ENCODE measurements at regions of chr2 and their contacts with region 1.

Region 1: GRCh38 chr2:68467077-68467960 is at the starts of genes APLF and FBXO48:
- DNase-seq: peak; percentile 99
- H3K4me3 ChIP-seq: peak within 1 kb of the TSS; percentile 80 to 94 (median 85)
- H3K27ac ChIP-seq: peak within 1 kb of the TSS; percentile 74
- H3K4me1 ChIP-seq: peaks cover 7% of the 10 kb centered on the region
- H3K27me3 ChIP-seq: no peaks in the 10 kb centered on the region
- CTCF ChIP-seq: no peak
- POLR2A ChIP-seq: peak; percentile 68
- total RNA-seq, gene APLF: 2.3 and 2.4 TPM in 2 replicates
- total RNA-seq, gene FBXO48: 0.73 and 0.83 TPM in 2 replicates

Region 2: DNA sequence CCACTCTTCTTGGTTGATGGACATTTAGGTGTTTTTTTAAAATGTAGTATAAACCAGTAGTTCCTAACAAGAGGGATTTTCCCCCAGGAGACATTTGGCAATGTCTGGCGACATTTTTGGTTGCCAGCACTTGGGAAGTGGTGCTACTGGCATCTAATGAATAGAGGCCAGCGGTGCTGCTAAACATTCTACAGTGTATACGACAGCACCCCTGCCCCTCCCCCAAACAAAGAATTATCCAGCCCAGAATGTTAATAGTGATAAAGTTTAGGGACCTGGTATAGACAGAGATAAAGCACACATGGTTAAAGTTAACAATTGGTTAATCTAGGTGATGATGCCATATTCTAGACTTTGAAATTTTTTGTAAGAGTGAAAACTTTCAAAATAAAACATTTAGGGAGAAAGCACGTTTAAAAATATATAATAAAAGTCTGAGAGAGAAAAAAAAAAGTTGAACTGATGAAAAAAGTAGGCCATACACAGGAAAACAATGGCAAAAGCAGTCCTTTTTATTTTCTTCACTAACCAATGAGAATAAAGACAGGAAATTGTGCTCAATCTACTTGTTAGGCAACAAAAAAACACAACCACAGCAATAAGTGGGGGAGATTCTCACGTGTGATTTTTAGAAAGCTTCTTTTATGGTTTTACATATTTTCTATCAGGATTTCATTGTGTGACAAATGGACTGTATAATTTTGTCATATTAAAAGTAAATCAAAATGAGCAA is 15.0 kb before region 1 on chr2:
- CTCF ChIA-PET with region 1: interaction called, 35 read pairs
- POLR2A ChIA-PET with region 1: no interaction called
- dilution Hi-C with region 1: no loop called
- intact Hi-C with region 1: no loop called
- DNase-seq: no peak
- H3K4me3 ChIP-seq: no peak overlapping the region
- H3K27ac ChIP-seq: no peak overlapping the region
- H3K4me1 ChIP-seq: no peaks in the 10 kb centered on the region
- H3K27me3 ChIP-seq: no peaks in the 10 kb centered on the region
- CTCF ChIP-seq: no peak
- POLR2A ChIP-seq: no peak

Region 3: GRCh38 chr2:68646302-68646701 is 179.0 kb after region 1 on chr2:
- CTCF ChIA-PET with region 1: interaction called, 21 read pairs
- POLR2A ChIA-PET with region 1: no interaction called
- dilution Hi-C with region 1: no loop called
- intact Hi-C with region 1: loop called (anchors 5 kb)
- DNase-seq: no peak
- H3K4me3 ChIP-seq: no peak overlapping the region
- H3K27ac ChIP-seq: no peak overlapping the region
- H3K4me1 ChIP-seq: peaks cover 4% of the 10 kb centered on the region
- H3K27me3 ChIP-seq: peaks cover 53 to 76% of the 10 kb centered on the region in 2 experiments
- CTCF ChIP-seq: no peak
- POLR2A ChIP-seq: no peak

Region 4: GRCh38 chr2:68715353-68716041 is 248.2 kb after region 1 on chr2:
- CTCF ChIA-PET with region 1: interaction called, 305 read pairs
- POLR2A ChIA-PET with region 1: no interaction called
- dilution Hi-C with region 1: no loop called
- intact Hi-C with region 1: loop called (anchors 1 kb)
- DNase-seq: peak; percentile 54
- H3K4me3 ChIP-seq: no peak overlapping the region
- H3K27ac ChIP-seq: no peak overlapping the region
- H3K4me1 ChIP-seq: no peaks in the 10 kb centered on the region
- H3K27me3 ChIP-seq: peaks cover 16 to 27% of the 10 kb centered on the region in 2 experiments
- CTCF ChIP-seq: peak; percentile 73 to 83
- POLR2A ChIP-seq: no peak

Region 5: DNA sequence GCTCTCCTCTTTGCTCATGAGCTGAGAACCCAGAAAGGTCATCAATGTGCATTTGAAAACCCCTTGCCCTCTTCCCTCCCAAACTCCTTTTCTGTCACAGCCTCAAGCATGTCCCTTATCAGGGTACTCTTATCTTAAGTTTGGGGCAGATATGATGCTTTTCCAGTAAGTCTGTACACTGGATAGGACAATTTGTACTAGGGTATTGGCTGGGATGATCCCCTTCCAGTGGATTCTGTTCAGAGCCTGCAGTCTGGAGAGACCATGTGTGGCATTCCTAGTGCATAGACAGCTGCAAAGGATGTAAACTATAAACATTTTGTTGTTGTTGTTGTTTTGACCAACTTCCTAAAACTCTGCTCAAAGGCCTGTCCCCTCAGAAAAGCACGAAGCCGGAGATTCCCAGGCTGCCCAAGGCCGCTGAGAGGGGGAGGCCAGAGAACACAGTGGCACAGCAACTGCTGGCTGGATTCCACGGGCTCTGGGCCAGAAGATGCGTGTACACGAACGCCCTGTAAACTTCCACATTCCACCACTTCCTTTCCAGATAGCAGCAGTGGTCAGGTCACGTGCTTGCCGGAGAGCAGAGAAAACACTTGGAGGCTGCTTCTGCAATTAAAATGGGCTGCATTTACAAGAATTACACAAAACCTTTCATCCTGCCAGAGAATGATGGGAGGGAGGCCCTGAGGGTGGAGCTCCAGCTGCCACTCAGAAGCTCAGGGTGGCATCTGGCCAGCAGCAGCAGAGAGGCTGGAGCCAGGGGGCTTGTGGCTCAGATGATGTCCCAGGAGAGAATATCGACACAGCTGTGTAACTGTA is 361.8 kb after region 1 on chr2:
- CTCF ChIA-PET with region 1: no interaction called
- POLR2A ChIA-PET with region 1: no interaction called
- dilution Hi-C with region 1: no loop called
- intact Hi-C with region 1: loop called (anchors 5 kb)
- DNase-seq: peak; percentile 99
- H3K4me3 ChIP-seq: no peak overlapping the region
- H3K27ac ChIP-seq: peak overlapping the region; percentile 70
- H3K4me1 ChIP-seq: peaks cover 43% of the 10 kb centered on the region
- H3K27me3 ChIP-seq: no peaks in the 10 kb centered on the region
- CTCF ChIP-seq: no peak
- POLR2A ChIP-seq: no peak

Region 6: GRCh38 chr2:68925295-68925896 is 458.1 kb after region 1 on chr2:
- CTCF ChIA-PET with region 1: interaction called, 98 read pairs
- POLR2A ChIA-PET with region 1: no interaction called
- dilution Hi-C with region 1: no loop called
- intact Hi-C with region 1: loop called (anchors 1 kb)
- DNase-seq: peak; percentile 58
- H3K4me3 ChIP-seq: no peak overlapping the region
- H3K27ac ChIP-seq: no peak overlapping the region
- H3K4me1 ChIP-seq: no peaks in the 10 kb centered on the region
- H3K27me3 ChIP-seq: peaks cover 2 to 9% of the 10 kb centered on the region in 2 experiments
- CTCF ChIP-seq: peak; percentile 83 to 87
- POLR2A ChIP-seq: no peak

Measured in endothelial cell of umbilical vein (primary cell).